ENCODE measurements at regions of chr1 and their contacts with region 1.

Region 1: GRCh38 chr1:24688621-24689195 is 45.6 kb downstream of the SRRM1 start:
- DNase-seq: peak; percentile 92

Region 2: GRCh38 chr1:24735509-24736375 is 47.0 kb after region 1 on chr1:
- intact Hi-C with region 1: loop called (anchors 5 to 10 kb)
- DNase-seq: peak; percentile 73

Region 3: GRCh38 chr1:24744911-24745710 is 56.4 kb after region 1 on chr1 and contains the start of gene CLIC4:
- intact Hi-C with region 1: loop called in 1 of 2 experiments (anchors 5 kb)
- DNase-seq: peak; percentile 100
- total RNA-seq, gene CLIC4: 566 to 848 TPM

Region 4: DNA sequence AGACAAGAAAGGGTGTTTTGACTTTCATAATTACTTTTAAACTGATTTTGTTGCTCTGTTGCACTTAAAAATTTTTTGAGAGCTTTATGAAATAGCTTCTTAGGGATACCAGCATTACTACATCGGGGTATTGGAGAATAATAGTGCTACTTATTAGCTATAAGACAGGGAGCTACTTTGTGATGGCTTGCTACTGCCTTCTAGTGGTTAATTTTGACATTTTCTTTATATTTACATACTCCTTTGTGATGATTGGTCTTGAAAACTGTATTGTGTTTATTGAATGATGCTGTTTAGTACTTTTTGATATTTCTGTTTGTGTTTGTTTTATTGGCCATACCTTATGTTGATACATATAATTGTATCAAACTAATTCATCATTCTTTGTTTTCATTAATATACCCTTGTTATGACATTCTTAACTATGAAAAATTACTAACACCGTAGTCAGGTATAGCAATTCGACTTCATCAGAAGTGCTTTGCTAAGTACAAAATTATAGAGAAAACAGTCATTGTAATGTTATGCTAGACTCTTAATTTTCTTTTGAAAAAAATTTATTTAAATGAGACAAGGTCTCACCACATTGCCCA is 142.1 kb after region 1 on chr1:
- intact Hi-C with region 1: loop called (anchors 2 to 5 kb)
- DNase-seq: no peak

Measured in posterior vena cava (tissue), 2 donors.